Natural killer cell (primary cell): ENCODE measurements at regions of chr15 and their contacts with region 1.

Region 1: GRCh38 chr15:55290528-55291057 is 980 bp upstream of the RAB27A start:
- DNase-seq: peak; percentile 82 to 91
- ATAC-seq: peak; percentile 66 to 87 (median 77)
- H3K4me3 ChIP-seq: peak overlapping the region; percentile 80
- H3K4me3 Mint-ChIP-seq: peak overlapping the region; percentile 92
- H3K27ac ChIP-seq: peak overlapping the region; percentile 91
- H3K27ac Mint-ChIP-seq: peak overlapping the region; percentile 93 to 99
- H3K4me1 ChIP-seq: peaks cover 24% of the 10 kb centered on the region
- H3K4me1 Mint-ChIP-seq: peaks cover 40 to 41% of the 10 kb centered on the region in 2 donors
- H3K27me3 ChIP-seq: no peaks in the 10 kb centered on the region
- H3K27me3 Mint-ChIP-seq: no peaks in the 10 kb centered on the region
- CTCF ChIP-seq: peak; percentile 93

Region 2: GRCh38 chr15:55196458-55197361 is 93.9 kb before region 1 on chr15 and contains the start of gene RSL24D1:
- intact Hi-C with region 1: loop called (anchors 1 kb)
- DNase-seq: peak; percentile 89 to 99
- ATAC-seq: peak; percentile 94 to 99 (median 97)
- H3K4me3 ChIP-seq: peak within 1 kb of the TSS; percentile 82
- H3K4me3 Mint-ChIP-seq: no peak within 1 kb of the TSS
- H3K27ac ChIP-seq: peak within 1 kb of the TSS; percentile 90
- H3K27ac Mint-ChIP-seq: no peak within 1 kb of the TSS
- H3K4me1 ChIP-seq: peaks cover 3% of the 10 kb centered on the region
- H3K4me1 Mint-ChIP-seq: peaks cover 0 to 9% of the 10 kb centered on the region in 2 donors
- H3K27me3 ChIP-seq: no peaks in the 10 kb centered on the region
- H3K27me3 Mint-ChIP-seq: no peaks in the 10 kb centered on the region
- CTCF ChIP-seq: peak; percentile 27
- total RNA-seq, gene RSL24D1: 97.4 to 102 (median 102) TPM

Region 3: GRCh38 chr15:55221090-55222011 is 69.2 kb before region 1 on chr15:
- intact Hi-C with region 1: loop called (anchors 1 kb)
- DNase-seq: peak; percentile 20 to 43
- ATAC-seq: peak; percentile 51 to 70 (median 56)
- H3K4me3 ChIP-seq: no peak overlapping the region
- H3K4me3 Mint-ChIP-seq: peak overlapping the region; percentile 56
- H3K27ac ChIP-seq: peak overlapping the region; percentile 76
- H3K27ac Mint-ChIP-seq: peak overlapping the region; percentile 81 to 91
- H3K4me1 ChIP-seq: peaks cover 35% of the 10 kb centered on the region
- H3K4me1 Mint-ChIP-seq: peaks cover 66 to 71% of the 10 kb centered on the region in 2 donors
- H3K27me3 ChIP-seq: no peaks in the 10 kb centered on the region
- H3K27me3 Mint-ChIP-seq: no peaks in the 10 kb centered on the region
- CTCF ChIP-seq: no peak

Region 4: GRCh38 chr15:55247766-55248427 is 42.7 kb before region 1 on chr15:
- intact Hi-C with region 1: loop called (anchors 1 kb)
- DNase-seq: peak; percentile 41 to 54
- ATAC-seq: peak; percentile 85 to 95 (median 88)
- H3K4me3 ChIP-seq: no peak overlapping the region
- H3K4me3 Mint-ChIP-seq: peak overlapping the region; percentile 41
- H3K27ac ChIP-seq: peak overlapping the region; percentile 6
- H3K27ac Mint-ChIP-seq: peak overlapping the region; percentile 30 to 80
- H3K4me1 ChIP-seq: peaks cover 28% of the 10 kb centered on the region
- H3K4me1 Mint-ChIP-seq: peaks cover 71 to 72% of the 10 kb centered on the region in 2 donors
- H3K27me3 ChIP-seq: no peaks in the 10 kb centered on the region
- H3K27me3 Mint-ChIP-seq: no peaks in the 10 kb centered on the region
- CTCF ChIP-seq: no peak

Region 5: DNA sequence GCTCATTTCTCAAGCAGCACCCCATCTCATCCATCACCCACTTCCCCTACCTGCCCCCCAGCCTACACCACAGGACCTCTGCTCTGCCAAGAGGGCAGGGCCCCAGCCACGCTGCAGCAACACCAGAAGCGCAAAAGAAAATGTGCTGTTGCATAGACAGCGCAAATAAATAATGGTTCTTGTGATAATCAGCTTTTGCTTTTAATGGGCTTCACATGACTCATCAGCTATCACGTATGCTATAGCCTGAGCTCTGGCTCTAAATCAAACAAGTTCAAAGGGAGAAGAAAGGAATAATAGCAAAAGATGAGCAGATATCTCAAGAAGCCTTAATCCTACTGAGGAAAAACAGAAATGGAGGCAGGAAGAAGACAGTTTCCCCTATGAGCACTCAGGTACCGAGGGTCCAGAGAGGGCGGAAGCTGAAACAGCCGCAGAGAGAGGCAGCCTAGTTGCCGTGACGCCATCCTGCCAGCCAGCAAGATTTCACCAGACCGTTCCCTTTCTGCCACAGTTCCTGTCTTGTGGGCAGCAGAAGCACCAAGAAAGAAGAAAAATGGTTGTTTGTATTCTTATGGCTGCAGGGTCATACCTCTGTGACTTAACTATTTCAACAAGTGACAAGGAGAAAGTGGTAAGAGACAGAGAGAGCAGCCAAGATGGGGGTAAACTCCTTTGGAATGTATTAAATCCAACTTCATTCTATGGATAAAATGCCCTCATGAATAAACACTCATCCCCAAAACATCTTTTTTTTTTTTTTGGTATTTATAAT is 23.0 kb before region 1 on chr15:
- intact Hi-C with region 1: loop called (anchors 1 kb)
- DNase-seq: peak; percentile 68 to 90
- ATAC-seq: peak; percentile 85 to 94 (median 90)
- H3K4me3 ChIP-seq: peak overlapping the region; percentile 6
- H3K4me3 Mint-ChIP-seq: peak overlapping the region; percentile 76
- H3K27ac ChIP-seq: peak overlapping the region; percentile 88
- H3K27ac Mint-ChIP-seq: peak overlapping the region; percentile 96 to 98
- H3K4me1 ChIP-seq: peaks cover 50% of the 10 kb centered on the region
- H3K4me1 Mint-ChIP-seq: peaks cover 81 to 93% of the 10 kb centered on the region in 2 donors
- H3K27me3 ChIP-seq: no peaks in the 10 kb centered on the region
- H3K27me3 Mint-ChIP-seq: no peaks in the 10 kb centered on the region
- CTCF ChIP-seq: no peak

Region 6: DNA sequence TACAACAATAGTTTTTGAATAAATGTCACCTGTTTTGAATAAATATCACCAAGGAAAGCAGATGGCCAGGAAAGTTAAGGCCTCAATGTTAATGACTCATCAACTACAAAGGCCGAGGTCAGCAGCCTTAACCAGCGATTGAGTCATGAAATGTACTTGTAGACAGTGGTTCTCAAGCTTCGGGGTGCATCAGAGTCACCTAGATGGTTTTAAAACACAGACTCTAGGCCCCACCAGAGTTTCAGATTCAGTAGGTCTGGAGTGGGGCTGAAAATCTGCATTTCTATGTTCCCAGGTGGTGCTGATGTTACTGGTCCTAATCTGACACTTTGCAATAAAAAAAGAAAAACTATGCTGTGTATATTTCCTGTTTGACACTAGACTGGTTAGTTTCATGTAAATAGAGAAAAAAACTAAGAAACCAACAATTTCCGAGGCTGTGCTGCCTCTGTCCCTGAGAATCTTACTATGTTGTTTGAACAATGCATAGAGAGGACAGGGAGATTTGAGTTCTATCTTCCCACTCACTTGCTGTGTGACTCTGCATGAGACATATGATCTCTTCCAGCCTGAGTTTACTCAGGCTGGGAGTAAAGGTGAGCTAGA is 10.7 kb before region 1 on chr15:
- intact Hi-C with region 1: loop called (anchors 1 kb)
- DNase-seq: peak; percentile 49 to 78
- ATAC-seq: peak; percentile 65 to 76 (median 71)
- H3K4me3 ChIP-seq: no peak overlapping the region
- H3K4me3 Mint-ChIP-seq: peak overlapping the region; percentile 90
- H3K27ac ChIP-seq: peak overlapping the region; percentile 93
- H3K27ac Mint-ChIP-seq: peak overlapping the region; percentile 93 to 99
- H3K4me1 ChIP-seq: peaks cover 80% of the 10 kb centered on the region
- H3K4me1 Mint-ChIP-seq: peaks cover 94 to 96% of the 10 kb centered on the region in 2 donors
- H3K27me3 ChIP-seq: no peaks in the 10 kb centered on the region
- H3K27me3 Mint-ChIP-seq: no peaks in the 10 kb centered on the region
- CTCF ChIP-seq: no peak

Region 7: DNA sequence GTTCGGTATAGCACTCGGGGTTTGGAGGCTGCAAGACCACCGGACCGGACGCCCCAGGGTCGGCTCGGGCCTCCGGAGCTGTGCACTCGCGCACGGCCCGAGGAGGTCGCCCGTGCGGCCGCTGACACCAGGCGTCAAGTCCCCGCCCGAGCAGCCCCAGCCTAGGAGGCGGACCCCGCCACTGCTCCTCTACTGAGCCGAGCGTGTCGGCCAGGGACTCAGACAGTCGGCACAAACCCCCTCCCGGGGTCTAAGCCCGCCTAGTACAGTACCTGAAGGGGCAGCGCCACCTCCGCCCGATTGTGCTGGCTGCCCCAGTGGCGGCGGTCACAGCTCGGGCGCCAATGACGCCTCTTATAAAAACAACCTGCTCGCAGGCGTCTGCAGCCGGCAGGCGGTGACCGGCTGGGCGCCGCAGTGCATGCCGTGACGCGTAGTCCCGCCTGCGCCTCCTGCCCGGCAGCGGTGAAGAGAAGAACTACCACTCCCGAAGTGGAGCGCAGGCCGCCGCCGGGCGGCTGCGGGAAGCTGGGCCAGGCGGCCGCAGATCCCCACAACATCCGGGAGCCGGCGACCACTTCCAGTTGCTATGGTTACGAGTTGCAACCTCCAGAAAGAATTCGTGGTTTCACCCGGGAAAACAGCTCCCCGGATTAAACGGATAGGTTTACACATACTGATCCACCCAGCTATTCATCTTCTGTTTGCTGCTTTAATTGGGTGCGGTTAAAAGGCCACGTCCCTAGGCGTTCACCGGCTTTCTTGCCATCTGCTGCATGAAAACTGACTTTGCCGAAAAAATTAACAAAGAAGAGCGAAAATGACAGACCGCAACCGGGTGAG is 117.6 kb after region 1 on chr15 and contains the starts of genes CCPG1 and PIERCE2:
- intact Hi-C with region 1: loop called (anchors 10 kb)
- DNase-seq: peak; percentile 86 to 94
- ATAC-seq: peak; percentile 88 to 95 (median 91)
- H3K4me3 ChIP-seq: peak within 1 kb of the TSS; percentile 82
- H3K4me3 Mint-ChIP-seq: peak within 1 kb of the TSS; percentile 97
- H3K27ac ChIP-seq: peak within 1 kb of the TSS; percentile 92
- H3K27ac Mint-ChIP-seq: peak within 1 kb of the TSS; percentile 92 to 94
- H3K4me1 ChIP-seq: peaks cover 25% of the 10 kb centered on the region
- H3K4me1 Mint-ChIP-seq: peaks cover 31 to 32% of the 10 kb centered on the region in 2 donors
- H3K27me3 ChIP-seq: no peaks in the 10 kb centered on the region
- H3K27me3 Mint-ChIP-seq: no peaks in the 10 kb centered on the region
- CTCF ChIP-seq: peak; percentile 91
- total RNA-seq, gene CCPG1: 41.6 to 53.6 (median 43.8) TPM
- total RNA-seq, gene PIERCE2: 0.47 to 0.53 TPM in 2 of 3 donors, not detected in the other